ENCODE measurements at regions of chr20 and their contacts with region 1.

Region 1: DNA sequence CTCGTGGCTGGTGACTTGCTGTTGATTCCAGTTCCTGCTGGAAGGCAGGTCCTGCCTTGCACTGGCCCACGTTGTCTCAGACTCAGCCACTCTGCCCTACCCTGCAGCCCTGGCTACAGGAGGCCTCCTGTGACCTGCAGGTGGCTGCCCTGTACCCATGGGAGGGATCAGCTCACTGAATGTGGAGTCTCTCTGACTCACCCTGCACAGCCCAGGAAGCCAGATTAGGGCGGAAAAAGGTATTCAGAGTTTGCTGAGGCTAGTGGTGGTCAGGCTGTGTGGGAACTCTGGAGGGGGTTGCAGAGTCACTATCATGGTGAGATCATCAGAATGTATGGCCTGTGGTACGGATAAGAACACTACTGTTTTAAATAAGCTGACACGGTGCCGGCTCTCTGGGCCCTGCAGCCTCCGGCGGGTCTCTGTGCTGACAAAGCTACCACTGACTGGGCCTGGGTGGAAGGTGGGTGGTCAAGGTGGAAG is 24.7 kb upstream of the PYGB start:
- DNase-seq: peak; percentile 76
- ATAC-seq: peak; percentile 95
- H3K4me3 ChIP-seq: 0 out of 4 replicates have a peak overlapping the region, but pooled peaks of 1 of the 2 experiments have one; percentile 15
- H3K27ac ChIP-seq: peak overlapping the region; percentile 53
- H3K4me1 ChIP-seq: peaks cover 28 to 35% of the 10 kb centered on the region in 2 experiments
- H3K27me3 ChIP-seq: no peaks in the 10 kb centered on the region
- CTCF ChIP-seq: peak; percentile 23 to 37 (median 32); a peak in 4 of 6 replicates
- POLR2A ChIP-seq: no peak
- RAD21 ChIP-seq: peak; percentile 65

Region 2: DNA sequence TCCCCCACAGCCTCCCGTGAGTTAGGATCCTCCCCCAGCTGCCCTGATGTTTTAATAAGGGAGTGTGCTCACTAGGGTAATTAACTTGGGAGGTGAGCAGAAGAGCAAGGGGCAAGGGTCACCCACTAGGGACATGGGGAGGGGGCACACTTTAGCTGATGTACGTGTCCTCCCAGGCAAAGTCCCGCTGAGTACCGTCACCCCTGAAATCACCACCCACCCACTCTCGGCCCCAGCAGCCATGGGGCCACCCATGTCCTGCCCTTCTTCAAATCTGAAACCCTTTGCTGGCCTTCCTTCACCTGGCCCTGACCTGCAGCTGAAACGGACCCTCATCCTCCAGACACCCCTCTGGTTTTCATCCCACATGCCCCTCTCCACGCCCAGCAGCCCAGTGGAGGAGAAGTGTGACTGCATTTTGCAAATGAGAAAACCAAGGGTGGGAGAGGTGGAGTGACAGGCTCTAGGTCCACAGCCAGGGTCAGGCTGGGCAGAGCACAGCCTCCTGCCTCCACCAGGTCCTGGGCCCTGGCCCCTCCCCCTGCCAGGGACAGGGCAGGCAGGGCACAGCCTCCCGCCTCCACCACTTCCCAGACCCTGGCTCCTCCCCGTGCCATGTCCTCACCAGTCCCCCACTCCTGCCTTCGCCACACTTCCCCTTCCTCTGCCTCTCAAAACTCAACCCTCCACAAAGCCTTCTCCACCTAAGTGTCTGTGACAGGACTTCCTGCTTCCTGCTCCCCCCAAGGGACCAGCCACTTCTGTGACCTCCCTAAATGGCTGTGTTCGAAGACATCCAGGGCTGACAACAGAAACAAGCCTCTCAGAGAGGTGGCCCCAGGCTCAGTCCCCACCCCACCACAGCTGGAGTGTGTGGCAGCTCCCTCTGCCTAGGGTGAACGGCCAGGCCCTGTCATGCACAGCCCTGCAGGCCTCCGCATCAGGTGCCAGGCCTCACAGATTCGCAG is 180.4 kb before region 1 on chr20:
- CTCF ChIA-PET with region 1: no interaction called
- POLR2A ChIA-PET with region 1: no interaction called
- RAD21 ChIA-PET with region 1: no interaction called
- intact Hi-C with region 1: no loop called
- DNase-seq: no peak
- ATAC-seq: peak; percentile 50
- H3K4me3 ChIP-seq: no peak overlapping the region
- H3K27ac ChIP-seq: no peak overlapping the region
- H3K4me1 ChIP-seq: no peaks in the 10 kb centered on the region
- H3K27me3 ChIP-seq: no peaks in the 10 kb centered on the region
- CTCF ChIP-seq: no peak
- POLR2A ChIP-seq: no peak
- RAD21 ChIP-seq: no peak

Region 3: GRCh38 chr20:25207960-25208534 is 15.2 kb before region 1 on chr20:
- CTCF ChIA-PET with region 1: no interaction called
- POLR2A ChIA-PET with region 1: no interaction called
- RAD21 ChIA-PET with region 1: no interaction called
- intact Hi-C with region 1: no loop called
- DNase-seq: no peak
- ATAC-seq: no peak
- H3K4me3 ChIP-seq: no peak overlapping the region
- H3K27ac ChIP-seq: no peak overlapping the region
- H3K4me1 ChIP-seq: peaks cover 0 to 3% of the 10 kb centered on the region in 2 experiments; a peak in 1 of 4 replicates
- H3K27me3 ChIP-seq: no peaks in the 10 kb centered on the region
- CTCF ChIP-seq: no peak
- POLR2A ChIP-seq: no peak
- RAD21 ChIP-seq: no peak

Region 4: GRCh38 chr20:25237610-25238318 is 14.5 kb after region 1 on chr20:
- CTCF ChIA-PET with region 1: no interaction called
- POLR2A ChIA-PET with region 1: interaction called, 6 read pairs
- RAD21 ChIA-PET with region 1: no interaction called
- intact Hi-C with region 1: loop called (anchors 1 kb)
- DNase-seq: peak; percentile 94
- ATAC-seq: peak; percentile 91
- H3K4me3 ChIP-seq: peak overlapping the region; percentile 12 to 42
- H3K27ac ChIP-seq: peak overlapping the region; percentile 60
- H3K4me1 ChIP-seq: peaks cover 39 to 67% of the 10 kb centered on the region in 2 experiments
- H3K27me3 ChIP-seq: no peaks in the 10 kb centered on the region
- CTCF ChIP-seq: no peak
- POLR2A ChIP-seq: no peak
- RAD21 ChIP-seq: peak; percentile 30

Region 5: GRCh38 chr20:25247956-25248785 is 25.0 kb after region 1 on chr20 and contains the start of gene PYGB:
- CTCF ChIA-PET with region 1: interaction called, 6 read pairs
- POLR2A ChIA-PET with region 1: interaction called, 6 read pairs
- RAD21 ChIA-PET with region 1: no interaction called
- intact Hi-C with region 1: loop called (anchors 1 kb)
- DNase-seq: peak; percentile 41
- ATAC-seq: peak; percentile 85
- H3K4me3 ChIP-seq: peak within 1 kb of the TSS; percentile 79 to 80
- H3K27ac ChIP-seq: peak within 1 kb of the TSS; percentile 93
- H3K4me1 ChIP-seq: peaks cover 27 to 39% of the 10 kb centered on the region in 2 experiments
- H3K27me3 ChIP-seq: no peaks in the 10 kb centered on the region
- CTCF ChIP-seq: no peak
- POLR2A ChIP-seq: peak; percentile 96
- RAD21 ChIP-seq: no peak
- total RNA-seq, gene PYGB: 87.8 TPM

Region 6: GRCh38 chr20:25600632-25601031 is 377.4 kb after region 1 on chr20:
- CTCF ChIA-PET with region 1: no interaction called
- POLR2A ChIA-PET with region 1: no interaction called
- RAD21 ChIA-PET with region 1: no interaction called
- intact Hi-C with region 1: no loop called
- DNase-seq: no peak
- ATAC-seq: no peak
- H3K4me3 ChIP-seq: no peak overlapping the region
- H3K27ac ChIP-seq: no peak overlapping the region
- H3K4me1 ChIP-seq: no peaks in the 10 kb centered on the region
- H3K27me3 ChIP-seq: no peaks in the 10 kb centered on the region
- CTCF ChIP-seq: no peak
- POLR2A ChIP-seq: no peak
- RAD21 ChIP-seq: no peak